Thyroid gland (tissue), 4 donors: ENCODE measurements at regions of chr3 and their contacts with region 1.

Region 1: GRCh38 chr3:138928727-138929385 is 18.1 kb downstream of the FOXL2 start:
- DNase-seq: no peak
- H3K4me3 ChIP-seq: no peak overlapping the region
- H3K27ac ChIP-seq: no peak overlapping the region
- H3K4me1 ChIP-seq: peaks cover 3 to 7% of the 10 kb centered on the region in 2 donors
- H3K27me3 ChIP-seq: no peaks in the 10 kb centered on the region
- CTCF ChIP-seq: no peak
- POLR2A ChIP-seq: no peak

Region 2: DNA sequence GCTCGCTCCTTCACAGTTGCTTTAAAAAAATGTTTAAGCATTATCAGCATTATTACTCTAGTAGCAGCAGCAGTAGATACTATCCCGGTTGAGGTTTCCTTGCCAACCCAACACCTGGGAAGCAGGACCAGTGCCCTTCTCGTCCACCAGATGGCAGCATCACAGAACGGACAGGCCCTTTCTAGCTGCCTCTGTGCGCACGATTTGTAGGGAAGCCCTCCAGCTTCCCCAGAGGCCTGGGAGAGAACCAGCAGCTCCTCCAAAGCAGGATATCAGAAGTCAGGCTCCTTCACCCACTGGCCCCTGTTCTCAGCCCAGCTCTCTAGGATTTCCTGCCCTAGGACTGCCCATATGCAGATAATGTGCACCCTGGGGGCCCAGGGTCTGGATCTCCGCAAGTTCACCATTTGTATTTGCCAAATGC is 511.3 kb before region 1 on chr3:
- intact Hi-C with region 1: loop called (anchors 5 kb)
- DNase-seq: peak; percentile 84 to 88
- H3K4me3 ChIP-seq: no peak overlapping the region
- H3K27ac ChIP-seq: no peak overlapping the region
- H3K4me1 ChIP-seq: no peaks in the 10 kb centered on the region
- H3K27me3 ChIP-seq: no peaks in the 10 kb centered on the region
- CTCF ChIP-seq: peak; percentile 56 to 95 (median 90)
- POLR2A ChIP-seq: no peak